HEK293T (cell line): ENCODE measurements at regions of chr3 and their contacts with region 1.

Region 1: GRCh38 chr3:124078953-124079911 is 87.3 kb upstream of the ROPN1 start:
- DNase-seq: peak; percentile 43

Region 2: GRCh38 chr3:123870033-123870432 is 209.2 kb before region 1 on chr3:
- CTCF ChIA-PET with region 1: no interaction called
- POLR2A ChIA-PET with region 1: no interaction called
- DNase-seq: no peak

Region 3: GRCh38 chr3:124014366-124014942 is 64.8 kb before region 1 on chr3:
- CTCF ChIA-PET with region 1: interaction called, 14 read pairs
- POLR2A ChIA-PET with region 1: no interaction called
- DNase-seq: no peak

Region 4: DNA sequence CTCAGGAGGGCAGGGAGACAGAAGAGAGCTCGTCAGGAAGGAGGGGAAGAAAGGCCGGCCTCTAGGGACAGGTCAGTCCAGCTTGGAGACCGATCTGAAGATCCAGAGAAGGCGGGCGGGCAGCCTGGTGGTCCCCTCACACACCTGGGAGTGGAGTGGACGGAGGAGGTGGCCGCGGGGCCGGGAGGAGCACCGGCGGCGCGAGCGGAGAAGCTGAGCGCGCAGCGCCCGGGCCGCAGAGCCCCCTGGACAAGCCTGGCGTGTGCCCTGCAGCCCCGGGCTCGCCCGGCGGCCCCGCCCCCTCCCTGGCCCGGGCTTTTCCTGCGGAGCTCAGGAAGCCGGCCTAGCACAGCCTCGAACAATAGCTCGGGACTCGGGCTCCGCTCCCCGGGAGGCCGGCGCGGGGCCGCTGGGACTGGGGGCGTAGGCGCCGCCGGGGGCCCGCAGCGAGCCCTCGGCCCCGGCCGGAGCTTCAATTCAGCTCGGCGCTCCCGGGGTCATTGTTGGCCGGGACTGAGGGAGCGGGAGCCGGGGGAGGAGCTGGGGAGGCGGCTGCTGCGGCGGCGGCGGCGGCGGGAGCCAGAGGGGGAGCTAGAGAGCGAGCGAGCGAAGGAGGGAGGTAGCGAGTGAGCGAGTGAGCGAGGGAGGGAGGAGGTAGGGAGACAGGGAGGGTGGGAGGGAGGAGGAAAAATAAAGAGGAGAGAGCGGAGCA is 46.4 kb before region 1 on chr3:
- CTCF ChIA-PET with region 1: interaction called, 15 read pairs
- POLR2A ChIA-PET with region 1: interaction called, 3 read pairs
- DNase-seq: peak; percentile 91